Gastrocnemius medialis (tissue), 4 donors: ENCODE measurements at regions of chr12 and their contacts with region 1.

Region 1: DNA sequence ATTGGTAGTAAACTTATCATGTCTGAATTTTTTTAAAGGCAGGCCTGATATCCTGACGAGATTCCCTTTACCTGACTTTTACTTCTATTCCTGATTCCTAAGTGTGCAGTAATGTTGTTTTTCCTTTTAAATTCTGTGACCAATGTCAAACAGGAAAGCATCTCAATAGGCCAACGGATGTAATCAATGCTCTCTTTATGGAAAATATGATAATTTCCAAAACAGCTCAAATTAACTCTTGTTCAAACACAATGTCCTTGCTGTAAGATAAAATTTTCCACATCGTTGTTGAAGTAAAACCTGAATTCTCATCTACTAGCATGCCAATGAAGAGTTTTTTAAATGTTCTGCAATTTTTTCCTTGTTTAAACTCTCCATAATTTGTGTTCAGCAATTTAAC is 8.0 kb upstream of the TAS2R31 start:
- DNase-seq: no peak
- ATAC-seq: no peak
- H3K4me3 ChIP-seq: no peak overlapping the region
- H3K27ac ChIP-seq: no peak overlapping the region
- H3K4me1 ChIP-seq: no peaks in the 10 kb centered on the region
- H3K27me3 ChIP-seq: no peaks in the 10 kb centered on the region
- CTCF ChIP-seq: no peak
- POLR2A ChIP-seq: no peak

Region 2: GRCh38 chr12:11108862-11109261 is 69.7 kb after region 1 on chr12:
- in situ Hi-C with region 1: loop called in 1 of 4 experiments (anchors 5 kb)
- intact Hi-C with region 1: no loop called
- DNase-seq: no peak
- ATAC-seq: no peak
- H3K4me3 ChIP-seq: no peak overlapping the region
- H3K27ac ChIP-seq: no peak overlapping the region
- H3K4me1 ChIP-seq: no peaks in the 10 kb centered on the region
- H3K27me3 ChIP-seq: no peaks in the 10 kb centered on the region
- CTCF ChIP-seq: no peak
- POLR2A ChIP-seq: no peak